HAP-1 (cell line): ENCODE measurements at regions of chr7 and their contacts with region 1.

Region 1: DNA sequence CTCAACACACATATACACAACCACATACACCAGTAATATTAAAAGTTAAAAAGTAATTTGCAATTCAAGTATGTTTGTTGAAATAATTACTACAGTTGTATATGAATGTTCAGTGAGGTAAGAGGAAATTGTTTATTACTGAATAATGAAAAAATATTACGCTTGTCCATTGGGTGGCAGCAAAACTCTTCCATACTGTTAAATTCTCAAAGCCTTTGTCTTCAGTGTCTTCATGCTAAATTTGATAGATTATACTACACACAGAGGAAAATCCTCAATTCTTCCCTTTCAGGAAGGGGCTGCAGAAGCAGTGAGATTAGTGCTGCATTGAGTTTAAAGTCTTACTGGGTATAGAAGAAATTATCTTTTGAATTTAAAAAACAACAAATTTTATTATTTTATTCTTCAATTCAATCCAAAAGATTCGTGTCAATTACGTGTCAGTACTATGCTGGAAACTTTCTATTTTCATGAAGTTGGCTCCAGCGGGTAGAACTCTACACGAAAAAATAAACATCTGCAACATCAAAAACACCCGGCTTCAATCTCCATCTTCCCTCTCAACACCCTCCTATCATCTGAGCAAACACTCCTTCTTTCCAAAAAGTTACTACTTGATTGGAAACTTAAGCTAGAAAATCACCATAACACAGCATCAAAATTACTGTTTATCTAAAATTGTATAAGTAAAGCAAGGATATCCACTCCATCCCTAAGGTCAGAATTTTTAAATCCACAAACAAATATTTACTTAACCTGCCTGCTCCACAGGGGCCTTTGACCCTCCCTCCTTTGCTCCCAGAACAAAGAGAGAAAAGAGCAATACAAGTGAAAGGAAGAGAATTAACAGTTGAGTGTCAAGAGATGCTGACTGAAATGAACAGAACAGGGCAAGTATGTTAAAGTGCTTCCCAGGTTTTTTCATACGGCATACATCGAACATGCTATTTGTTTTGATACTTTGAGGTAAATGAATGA is 37.0 kb upstream of the TES start:
- DNase-seq: peak; percentile 12 to 66
- H3K4me3 ChIP-seq: no peak overlapping the region
- H3K4me1 ChIP-seq: no peaks in the 10 kb centered on the region
- H3K27me3 ChIP-seq: no peaks in the 10 kb centered on the region; the same call in 1 of the 2 replicates

Region 2: DNA sequence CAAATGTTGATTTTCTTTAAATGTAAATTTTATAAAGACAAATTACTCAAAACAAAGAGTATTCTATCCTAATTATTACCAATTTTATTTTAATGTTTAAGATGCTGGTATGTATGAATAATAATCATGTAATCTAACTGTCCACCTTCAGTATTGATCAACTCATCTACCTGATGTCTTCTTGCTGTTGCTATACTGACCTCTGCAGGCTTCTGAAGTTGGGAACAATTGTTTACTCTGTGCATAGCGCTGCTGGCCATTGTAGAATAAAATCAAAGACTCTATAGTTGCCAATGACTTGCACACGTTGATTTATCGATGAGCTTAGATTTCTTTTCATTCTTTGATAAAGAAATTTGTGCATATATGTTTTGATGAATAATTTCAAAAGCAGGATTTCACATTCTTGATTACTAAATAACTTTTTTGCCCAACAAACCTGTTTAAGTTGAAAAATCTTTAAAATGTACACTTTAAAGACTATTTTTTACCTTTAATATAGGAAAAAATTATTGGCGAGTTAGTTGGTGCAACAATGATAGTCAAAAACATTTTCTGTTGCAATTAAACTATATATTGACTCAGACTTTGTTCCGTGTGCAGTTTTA is 425.1 kb before region 1 on chr7:
- in situ Hi-C with region 1: no loop called
- DNase-seq: no peak
- H3K4me3 ChIP-seq: no peak overlapping the region
- H3K4me1 ChIP-seq: no peaks in the 10 kb centered on the region
- H3K27me3 ChIP-seq: peaks cover 2% of the 10 kb centered on the region; the same call in 1 of the 2 replicates

Region 3: GRCh38 chr7:115952832-115953231 is 220.5 kb before region 1 on chr7:
- in situ Hi-C with region 1: no loop called
- DNase-seq: no peak
- H3K4me3 ChIP-seq: no peak overlapping the region
- H3K4me1 ChIP-seq: no peaks in the 10 kb centered on the region
- H3K27me3 ChIP-seq: no peaks in the 10 kb centered on the region

Region 4: GRCh38 chr7:116236020-116236630 is 62.8 kb after region 1 on chr7:
- in situ Hi-C with region 1: loop called (anchors 5 kb)
- DNase-seq: peak; percentile 37 to 50
- H3K4me3 ChIP-seq: no peak overlapping the region
- H3K4me1 ChIP-seq: peaks cover 17% of the 10 kb centered on the region
- H3K27me3 ChIP-seq: no peaks in the 10 kb centered on the region